T-cell (primary cell): ENCODE measurements at regions of chr6 and their contacts with region 1.

Region 1: GRCh38 chr6:162814426-162814973 is 86.7 kb downstream of the PACRG start:
- DNase-seq: no peak
- ATAC-seq: no peak
- H3K4me3 ChIP-seq: no peak overlapping the region
- H3K4me3 Mint-ChIP-seq: no peak overlapping the region
- H3K27ac ChIP-seq: no peak overlapping the region
- H3K27ac Mint-ChIP-seq: no peak overlapping the region
- H3K4me1 ChIP-seq: no peaks in the 10 kb centered on the region
- H3K4me1 Mint-ChIP-seq: no peaks in the 10 kb centered on the region
- H3K27me3 ChIP-seq: peaks cover 0 to 4% of the 10 kb centered on the region in 2 experiments
- H3K27me3 Mint-ChIP-seq: no peaks in the 10 kb centered on the region

Region 2: GRCh38 chr6:162962093-162962492 is 147.6 kb after region 1 on chr6:
- CTCF ChIA-PET with region 1: no interaction called
- POLR2A ChIA-PET with region 1: no interaction called
- DNase-seq: no peak
- ATAC-seq: no peak
- H3K4me3 ChIP-seq: no peak overlapping the region
- H3K4me3 Mint-ChIP-seq: no peak overlapping the region
- H3K27ac ChIP-seq: no peak overlapping the region
- H3K27ac Mint-ChIP-seq: no peak overlapping the region
- H3K4me1 ChIP-seq: no peaks in the 10 kb centered on the region
- H3K4me1 Mint-ChIP-seq: no peaks in the 10 kb centered on the region
- H3K27me3 ChIP-seq: no peaks in the 10 kb centered on the region
- H3K27me3 Mint-ChIP-seq: no peaks in the 10 kb centered on the region

Region 3: GRCh38 chr6:164693944-164694343 is 1879.4 kb after region 1 on chr6:
- CTCF ChIA-PET with region 1: no interaction called
- POLR2A ChIA-PET with region 1: interaction called in 1 of 2 experiments, 11 read pairs
- DNase-seq: no peak
- ATAC-seq: no peak
- H3K4me3 ChIP-seq: no peak overlapping the region
- H3K4me3 Mint-ChIP-seq: no peak overlapping the region
- H3K27ac ChIP-seq: no peak overlapping the region
- H3K27ac Mint-ChIP-seq: no peak overlapping the region
- H3K4me1 ChIP-seq: no peaks in the 10 kb centered on the region
- H3K4me1 Mint-ChIP-seq: no peaks in the 10 kb centered on the region
- H3K27me3 ChIP-seq: no peaks in the 10 kb centered on the region
- H3K27me3 Mint-ChIP-seq: no peaks in the 10 kb centered on the region